ENCODE measurements at regions of chr3 and their contacts with region 1.

Region 1: DNA sequence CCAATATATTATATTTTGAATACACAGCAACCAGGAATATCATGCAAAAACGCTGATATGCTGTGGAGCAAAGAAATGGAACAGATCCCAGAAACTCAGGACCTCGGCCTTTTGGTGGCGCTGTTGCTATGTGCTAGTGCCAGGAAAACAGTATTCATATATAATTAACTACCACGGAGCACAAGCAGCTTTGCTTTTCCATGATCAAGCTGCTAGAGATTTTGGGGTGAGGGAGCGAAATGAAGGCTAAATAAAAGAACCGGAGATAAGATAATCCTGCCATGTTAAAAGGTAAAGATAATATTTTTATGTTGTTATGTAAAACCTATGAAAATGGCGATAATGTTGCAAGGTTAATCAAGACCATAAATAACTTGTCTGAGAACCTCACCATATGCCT is 157.7 kb upstream of the FAM3D start:
- DNase-seq: peak; percentile 78
- H3K4me3 Mint-ChIP-seq: no peak overlapping the region
- H3K27ac Mint-ChIP-seq: no peak overlapping the region
- H3K4me1 Mint-ChIP-seq: no peaks in the 10 kb centered on the region
- H3K27me3 Mint-ChIP-seq: no peaks in the 10 kb centered on the region
- CTCF ChIP-seq: peak; percentile 77

Region 2: GRCh38 chr3:58640700-58641372 is 183.4 kb before region 1 on chr3:
- CTCF ChIA-PET with region 1: interaction called, 4 read pairs
- POLR2A ChIA-PET with region 1: no interaction called
- intact Hi-C with region 1: loop called (anchors 5 kb)
- DNase-seq: peak; percentile 83
- H3K4me3 Mint-ChIP-seq: no peak overlapping the region
- H3K27ac Mint-ChIP-seq: no peak overlapping the region
- H3K4me1 Mint-ChIP-seq: peaks cover under 1% of the 10 kb centered on the region
- H3K27me3 Mint-ChIP-seq: no peaks in the 10 kb centered on the region
- CTCF ChIP-seq: peak; percentile 93

Region 3: GRCh38 chr3:58837856-58838255 is 13.6 kb after region 1 on chr3:
- CTCF ChIA-PET with region 1: interaction called, 30 read pairs
- POLR2A ChIA-PET with region 1: no interaction called
- intact Hi-C with region 1: no loop called
- DNase-seq: no peak
- H3K4me3 Mint-ChIP-seq: no peak overlapping the region
- H3K27ac Mint-ChIP-seq: no peak overlapping the region
- H3K4me1 Mint-ChIP-seq: peaks cover 5% of the 10 kb centered on the region
- H3K27me3 Mint-ChIP-seq: no peaks in the 10 kb centered on the region
- CTCF ChIP-seq: no peak

Region 4: DNA sequence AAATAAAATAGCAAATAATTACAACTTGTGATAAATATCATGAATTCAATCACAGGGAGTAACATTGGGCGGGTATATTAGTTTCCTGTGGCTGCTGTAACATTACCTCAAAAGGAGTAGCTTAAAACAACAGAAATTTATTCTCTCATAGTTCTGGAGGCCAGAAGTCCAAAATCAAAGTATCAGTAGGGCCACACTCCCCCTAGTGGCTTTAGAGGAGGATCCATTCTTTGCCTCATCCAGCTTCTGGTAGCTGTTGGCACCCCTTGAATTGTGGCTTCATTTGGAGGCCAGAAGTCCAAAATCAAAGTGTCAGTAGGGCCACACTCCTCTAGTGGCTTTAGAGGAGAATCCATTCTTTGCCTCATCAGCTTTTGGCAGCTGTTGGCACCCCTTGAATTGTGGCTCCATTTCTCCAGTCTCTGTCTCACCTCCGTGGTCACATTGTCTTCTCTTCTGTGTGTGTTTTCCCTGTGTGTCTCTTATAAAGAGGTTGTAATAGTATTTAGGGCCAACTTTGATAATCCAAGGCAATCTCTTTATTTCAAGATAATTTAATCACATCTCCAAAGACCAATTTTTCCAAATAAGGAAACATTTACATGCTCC is 228.6 kb after region 1 on chr3:
- CTCF ChIA-PET with region 1: interaction called, 18 read pairs
- POLR2A ChIA-PET with region 1: interaction called, 3 read pairs
- intact Hi-C with region 1: loop called (anchors 2 kb)
- DNase-seq: peak; percentile 70
- H3K4me3 Mint-ChIP-seq: no peak overlapping the region
- H3K27ac Mint-ChIP-seq: no peak overlapping the region
- H3K4me1 Mint-ChIP-seq: no peaks in the 10 kb centered on the region
- H3K27me3 Mint-ChIP-seq: no peaks in the 10 kb centered on the region
- CTCF ChIP-seq: peak; percentile 60

Region 5: GRCh38 chr3:59235634-59236012 is 411.3 kb after region 1 on chr3:
- CTCF ChIA-PET with region 1: no interaction called
- POLR2A ChIA-PET with region 1: no interaction called
- intact Hi-C with region 1: loop called (anchors 10 kb)
- DNase-seq: no peak
- H3K4me3 Mint-ChIP-seq: no peak overlapping the region
- H3K27ac Mint-ChIP-seq: no peak overlapping the region
- H3K4me1 Mint-ChIP-seq: peaks cover 7% of the 10 kb centered on the region
- H3K27me3 Mint-ChIP-seq: no peaks in the 10 kb centered on the region
- CTCF ChIP-seq: no peak

Region 6: GRCh38 chr3:59809710-59810444 is 985.6 kb after region 1 on chr3:
- CTCF ChIA-PET with region 1: no interaction called
- POLR2A ChIA-PET with region 1: no interaction called
- intact Hi-C with region 1: loop called (anchors 10 kb)
- DNase-seq: peak; percentile 33
- H3K4me3 Mint-ChIP-seq: no peak overlapping the region
- H3K27ac Mint-ChIP-seq: peak overlapping the region; percentile 63
- H3K4me1 Mint-ChIP-seq: no peaks in the 10 kb centered on the region
- H3K27me3 Mint-ChIP-seq: no peaks in the 10 kb centered on the region
- CTCF ChIP-seq: peak; percentile 45

Measured in MCF 10A (cell line).